ENCODE measurements at regions of chr14 and their contacts with region 1.

Region 1: DNA sequence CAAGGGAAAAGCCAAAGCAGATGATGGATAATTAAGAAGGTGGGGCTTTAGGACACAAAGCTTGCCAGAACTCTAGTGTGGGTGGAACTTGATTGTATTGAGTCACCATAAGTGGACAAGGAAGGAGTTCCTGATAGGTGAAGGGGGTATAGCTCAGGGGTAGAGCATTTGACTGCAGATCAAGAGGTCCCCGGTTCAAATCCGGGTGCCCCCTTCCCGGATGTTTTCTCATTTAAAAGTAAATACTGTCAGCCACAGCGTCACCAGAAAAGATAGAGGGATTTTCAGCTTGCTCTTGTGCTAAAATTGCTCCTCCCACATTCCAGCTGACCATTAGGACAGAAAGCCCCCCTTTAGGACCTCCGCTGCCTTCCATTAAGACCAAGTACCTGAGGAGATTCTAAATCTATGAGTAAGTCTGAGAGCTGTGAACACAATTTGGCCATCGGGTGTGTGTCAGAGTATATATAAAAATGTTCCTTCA is 36.6 kb downstream of the DCAF4 start:
- DNase-seq: no peak
- H3K4me3 ChIP-seq: no peak overlapping the region
- H3K4me3 Mint-ChIP-seq: no peak overlapping the region
- H3K27ac ChIP-seq: no peak overlapping the region
- H3K27ac Mint-ChIP-seq: peak overlapping the region in 1 of 7 donors; percentile 61
- H3K4me1 ChIP-seq: peaks cover 7% of the 10 kb centered on the region
- H3K4me1 Mint-ChIP-seq: peaks cover 0 to 3% (median under 1%) of the 10 kb centered on the region in 4 donors
- H3K27me3 ChIP-seq: no peaks in the 10 kb centered on the region
- H3K27me3 Mint-ChIP-seq: no peaks in the 10 kb centered on the region

Region 2: DNA sequence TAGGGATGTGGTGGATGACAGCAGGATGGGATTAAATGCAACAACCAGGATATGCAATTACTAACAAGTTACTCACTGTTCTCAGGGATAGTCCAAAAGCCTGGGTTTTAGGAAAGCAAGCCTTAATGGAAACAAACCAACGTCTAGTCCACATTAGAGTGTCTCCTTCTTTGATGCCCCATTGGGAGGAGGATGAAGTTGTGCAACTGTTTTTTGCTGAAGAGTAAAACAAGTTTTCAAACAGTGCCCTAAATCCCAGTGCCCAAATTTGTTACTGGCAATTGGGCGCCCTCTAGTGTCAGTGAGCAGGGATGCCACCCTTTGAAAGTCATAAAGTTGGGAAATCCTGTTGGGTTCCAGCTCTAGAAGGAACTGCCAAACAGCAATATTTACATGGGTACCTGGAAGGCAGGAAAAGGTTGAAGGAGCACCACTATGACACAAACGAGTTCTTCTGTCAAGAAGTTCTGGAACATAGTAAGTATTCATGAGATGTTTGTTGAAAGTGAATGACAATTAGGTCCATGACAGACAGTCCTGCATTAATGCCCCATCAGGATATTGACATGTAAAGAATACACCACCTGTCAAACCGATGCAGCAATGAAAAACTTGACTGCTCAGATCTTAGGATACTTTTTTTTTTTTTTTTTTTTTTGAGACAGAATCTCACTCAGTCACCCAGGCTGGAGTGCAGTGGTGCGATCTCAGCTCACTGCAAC is 57.9 kb before region 1 on chr14:
- CTCF ChIA-PET with region 1: no interaction called
- POLR2A ChIA-PET with region 1: no interaction called
- intact Hi-C with region 1: no loop called
- DNase-seq: peak; percentile 57 to 72 (median 65)
- H3K4me3 ChIP-seq: no peak overlapping the region
- H3K4me3 Mint-ChIP-seq: no peak overlapping the region
- H3K27ac ChIP-seq: no peak overlapping the region
- H3K27ac Mint-ChIP-seq: peak overlapping the region in 2 of 7 donors; percentile 4 to 58
- H3K4me1 ChIP-seq: no peaks in the 10 kb centered on the region
- H3K4me1 Mint-ChIP-seq: peaks cover 0 to 6% (median 3%) of the 10 kb centered on the region in 4 donors
- H3K27me3 ChIP-seq: no peaks in the 10 kb centered on the region
- H3K27me3 Mint-ChIP-seq: peaks cover 0 to 8% of the 10 kb centered on the region in 2 donors

Region 3: DNA sequence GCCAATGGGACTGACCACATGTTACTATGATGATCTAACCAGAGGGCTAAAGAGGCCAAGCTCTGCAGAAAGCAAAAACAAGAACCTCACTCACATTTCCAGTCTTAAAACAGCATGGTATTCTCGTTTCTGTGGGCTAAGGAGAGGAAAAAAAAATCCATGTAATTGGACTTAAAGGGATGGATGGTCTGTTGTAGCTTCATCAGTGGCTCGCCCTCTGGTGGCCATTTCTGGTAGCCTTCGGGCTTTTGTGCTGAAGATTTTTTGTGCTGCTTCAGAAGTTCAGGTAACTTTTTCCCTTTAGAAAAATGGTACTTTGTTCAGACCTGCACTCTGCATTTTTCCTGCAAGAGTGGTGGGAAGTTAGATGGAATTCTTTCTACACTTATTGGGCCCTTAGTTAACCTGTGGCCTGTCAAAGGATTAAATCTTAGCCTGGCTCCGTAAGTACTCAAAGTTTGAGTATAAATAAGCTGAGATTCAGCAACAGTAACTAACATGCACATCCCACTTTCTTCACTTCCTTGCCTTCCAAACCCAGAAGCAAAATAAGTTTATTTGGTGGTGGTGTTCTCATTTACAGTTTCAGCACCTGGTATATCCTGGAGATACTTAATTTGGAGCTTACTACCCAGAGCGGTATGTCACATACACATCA is 14.3 kb before region 1 on chr14:
- CTCF ChIA-PET with region 1: interaction called, 14 read pairs
- POLR2A ChIA-PET with region 1: no interaction called
- intact Hi-C with region 1: no loop called
- DNase-seq: peak in 4 of 5 donors; percentile 35 to 51 (median 40)
- H3K4me3 ChIP-seq: no peak overlapping the region
- H3K4me3 Mint-ChIP-seq: no peak overlapping the region
- H3K27ac ChIP-seq: no peak overlapping the region
- H3K27ac Mint-ChIP-seq: peak overlapping the region in 1 of 7 donors; percentile 73
- H3K4me1 ChIP-seq: no peaks in the 10 kb centered on the region
- H3K4me1 Mint-ChIP-seq: peaks cover 0 to 4% (median 2%) of the 10 kb centered on the region in 4 donors
- H3K27me3 ChIP-seq: no peaks in the 10 kb centered on the region
- H3K27me3 Mint-ChIP-seq: no peaks in the 10 kb centered on the region

Measured in CD4-positive, alpha-beta memory T cell (primary cell).